Left ventricle myocardium superior (tissue), 1 donor: ENCODE measurements at regions of chr13 and their contacts with region 1.

Region 1: GRCh38 chr13:33799950-33800592 is 17.9 kb upstream of the RFC3 start:
- DNase-seq: no peak
- ATAC-seq: peak; percentile 43

Region 2: DNA sequence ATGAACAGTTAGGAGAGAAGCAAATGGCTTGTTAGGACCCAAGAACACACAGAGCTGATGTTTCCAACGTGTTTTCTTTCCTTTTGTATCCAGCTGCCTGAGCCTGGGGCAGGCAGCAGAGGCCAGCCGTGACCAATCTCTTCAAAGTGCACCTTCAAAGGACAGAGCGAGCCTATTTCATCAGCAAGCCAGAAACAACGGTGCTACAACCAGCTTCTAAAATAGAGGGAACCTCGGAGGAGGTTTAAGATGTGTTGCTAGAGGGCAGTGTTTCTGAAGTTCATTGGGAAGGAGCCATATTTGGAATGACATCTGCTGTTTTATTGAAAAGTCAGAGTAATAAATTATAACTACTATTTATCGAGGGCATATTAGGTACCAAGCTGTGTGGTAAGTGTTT is 38.3 kb before region 1 on chr13:
- intact Hi-C with region 1: no loop called
- DNase-seq: no peak
- ATAC-seq: peak; percentile 35

Region 3: GRCh38 chr13:33787051-33787591 is 12.9 kb before region 1 on chr13:
- intact Hi-C with region 1: loop called (anchors 1 kb)
- DNase-seq: no peak
- ATAC-seq: no peak

Region 4: GRCh38 chr13:34086281-34086680 is 286.2 kb after region 1 on chr13:
- intact Hi-C with region 1: loop called (anchors 10 kb)
- DNase-seq: no peak
- ATAC-seq: no peak